Gastrocnemius medialis (tissue), 4 donors: ENCODE measurements at regions of chr20 and their contacts with region 1.

Region 1: GRCh38 chr20:3248167-3248992 is 9.4 kb upstream of the SLC4A11 start:
- DNase-seq: peak in 1 of 2 donors; percentile 56
- ATAC-seq: peak; percentile 39 to 40
- H3K4me3 ChIP-seq: peak overlapping the region; percentile 4 to 19 (median 14)
- H3K27ac ChIP-seq: peak overlapping the region; percentile 46 to 63 (median 48)
- H3K4me1 ChIP-seq: peaks cover 12 to 15% of the 10 kb centered on the region in 2 donors
- H3K27me3 ChIP-seq: no peaks in the 10 kb centered on the region
- CTCF ChIP-seq: no peak
- POLR2A ChIP-seq: no peak

Region 2: GRCh38 chr20:3296261-3297078 is 48.1 kb after region 1 on chr20:
- in situ Hi-C with region 1: no loop called
- intact Hi-C with region 1: loop called (anchors 2 kb)
- DNase-seq: no peak
- ATAC-seq: peak in 1 of 2 donors; percentile 21
- H3K4me3 ChIP-seq: no peak overlapping the region
- H3K27ac ChIP-seq: peak overlapping the region; percentile 55 to 62 (median 57)
- H3K4me1 ChIP-seq: peaks cover 2 to 4% of the 10 kb centered on the region in 2 donors
- H3K27me3 ChIP-seq: no peaks in the 10 kb centered on the region
- CTCF ChIP-seq: no peak
- POLR2A ChIP-seq: no peak

Region 3: DNA sequence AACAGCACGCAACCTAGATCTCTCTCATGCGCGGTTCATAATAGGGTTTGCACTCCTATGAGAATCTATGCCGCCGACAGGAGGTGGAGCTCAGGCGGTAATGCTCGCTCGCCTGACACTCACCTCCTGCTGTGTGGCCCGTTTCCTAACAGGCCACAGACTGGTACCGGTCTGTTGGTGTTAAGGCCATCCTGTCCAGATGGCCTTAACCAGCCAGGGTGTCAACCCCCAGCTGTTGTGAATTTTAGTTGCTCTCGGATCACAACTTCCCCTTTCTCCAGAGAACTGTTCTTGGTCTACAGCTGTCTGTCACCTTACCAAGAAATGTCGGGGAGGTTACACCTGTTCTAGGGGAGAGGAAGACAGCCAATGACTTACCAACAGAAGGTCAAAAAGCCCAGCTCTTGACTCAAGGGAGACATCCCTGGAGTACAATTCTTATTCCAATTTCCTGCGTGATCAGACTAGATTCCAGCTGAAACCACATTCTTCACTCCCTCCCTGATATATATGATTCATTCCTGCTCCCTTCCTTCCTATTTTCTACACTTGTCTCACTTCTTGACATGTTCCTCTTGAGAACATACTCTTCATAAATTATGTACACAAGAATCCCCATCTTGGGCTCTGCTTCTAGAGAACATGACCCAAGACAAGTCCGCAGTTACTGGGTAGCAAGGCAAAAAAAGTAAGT is 182.1 kb after region 1 on chr20:
- in situ Hi-C with region 1: no loop called
- intact Hi-C with region 1: no loop called
- DNase-seq: no peak
- ATAC-seq: no peak
- H3K4me3 ChIP-seq: no peak overlapping the region
- H3K27ac ChIP-seq: no peak overlapping the region
- H3K4me1 ChIP-seq: no peaks in the 10 kb centered on the region
- H3K27me3 ChIP-seq: no peaks in the 10 kb centered on the region
- CTCF ChIP-seq: no peak
- POLR2A ChIP-seq: no peak